Ovary (tissue), 10 donors: ENCODE measurements at regions of chrX and their contacts with region 1.

Region 1: DNA sequence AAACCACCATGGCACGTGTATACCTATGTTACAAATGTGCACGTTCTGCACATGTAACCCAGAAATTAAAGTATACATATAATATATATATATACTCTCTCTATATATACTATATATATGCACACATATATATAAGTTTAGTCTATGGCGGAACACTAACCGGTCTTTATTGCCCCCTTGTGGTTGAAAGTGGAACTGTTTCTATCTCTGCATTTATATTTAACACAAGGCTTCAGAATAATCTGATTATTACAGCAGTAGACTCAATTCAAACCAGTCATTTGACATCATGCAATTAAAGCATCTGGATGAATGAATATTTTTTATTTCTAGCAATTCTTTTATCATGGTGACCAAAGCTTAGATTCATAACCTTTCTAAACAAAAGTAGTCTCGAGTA is 14.6 kb downstream of the RAB9B start:
- DNase-seq: no peak
- H3K4me3 ChIP-seq: no peak overlapping the region
- H3K27ac ChIP-seq: no peak overlapping the region
- H3K4me1 ChIP-seq: no peaks in the 10 kb centered on the region
- H3K27me3 ChIP-seq: no peaks in the 10 kb centered on the region
- CTCF ChIP-seq: peak; percentile 49 to 56 (median 49)
- EP300 ChIP-seq: no peak
- POLR2A ChIP-seq: no peak

Region 2: DNA sequence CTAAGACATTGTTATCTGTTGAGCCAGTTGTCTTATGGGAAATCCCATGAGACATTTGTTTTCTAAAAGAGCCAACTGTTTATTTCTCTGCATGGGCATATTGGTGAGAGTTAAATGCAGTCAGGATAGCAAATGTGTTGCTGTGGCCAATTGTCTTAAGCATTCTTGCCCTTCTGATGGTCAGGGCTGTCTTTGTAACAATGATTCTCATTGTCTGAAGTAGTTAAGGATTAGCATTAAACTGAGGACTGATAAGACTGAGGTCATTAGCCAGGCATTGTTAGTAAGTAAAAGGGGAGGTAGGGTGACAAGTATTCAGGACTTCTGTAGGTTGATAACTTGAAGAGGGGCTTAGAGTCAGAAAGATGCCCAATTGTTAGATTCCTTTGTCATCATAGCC is 119.8 kb before region 1 on chrX:
- intact Hi-C with region 1: loop called in 2 of 4 experiments (anchors 10 kb)
- DNase-seq: no peak
- H3K4me3 ChIP-seq: no peak overlapping the region
- H3K27ac ChIP-seq: no peak overlapping the region
- H3K4me1 ChIP-seq: peaks cover 1% of the 10 kb centered on the region
- H3K27me3 ChIP-seq: no peaks in the 10 kb centered on the region
- CTCF ChIP-seq: no peak
- EP300 ChIP-seq: no peak
- POLR2A ChIP-seq: no peak

Region 3: DNA sequence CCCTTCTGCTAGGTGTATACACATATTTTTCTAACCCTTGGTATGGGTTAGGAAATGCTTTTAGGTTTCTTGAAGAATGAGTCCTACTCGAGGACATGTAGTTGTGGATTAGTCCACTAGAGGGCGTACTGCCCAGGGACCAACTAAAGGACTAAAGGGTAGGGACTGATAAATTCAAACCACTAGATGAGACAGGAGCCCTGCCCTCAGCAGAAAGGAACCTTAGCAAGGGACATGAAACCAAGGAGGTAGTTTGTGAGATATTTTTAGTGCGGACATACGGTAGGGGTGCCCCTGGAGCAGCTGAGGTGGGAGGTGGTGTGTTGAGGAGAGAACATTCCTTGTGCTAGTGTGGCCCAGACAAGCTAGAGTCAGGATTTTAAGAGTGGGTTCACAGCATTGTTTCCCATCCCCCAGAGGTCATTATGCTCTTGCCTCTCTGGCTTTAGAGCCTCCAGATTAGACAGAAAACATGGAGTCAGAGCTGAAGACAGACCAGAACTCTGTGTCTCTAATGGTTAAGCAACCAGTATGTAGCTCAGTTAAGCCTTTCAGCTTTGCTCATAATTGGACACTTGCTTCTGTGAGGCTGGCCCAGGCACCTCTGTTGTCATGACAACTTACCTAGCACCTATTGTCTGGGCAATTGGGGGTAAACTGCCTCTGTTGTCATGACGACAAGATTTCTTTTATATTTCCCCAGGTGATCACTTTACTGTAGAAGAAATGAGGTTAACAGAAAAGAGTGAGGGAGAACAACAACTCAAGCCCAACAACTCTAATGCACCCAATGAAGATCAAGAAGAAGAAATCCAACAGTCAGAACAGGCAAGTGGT is 105.8 kb before region 1 on chrX:
- intact Hi-C with region 1: loop called in 1 of 4 experiments (anchors 10 kb)
- DNase-seq: peak in 1 of 5 donors; percentile 58
- H3K4me3 ChIP-seq: no peak overlapping the region
- H3K27ac ChIP-seq: no peak overlapping the region
- H3K4me1 ChIP-seq: no peaks in the 10 kb centered on the region
- H3K27me3 ChIP-seq: no peaks in the 10 kb centered on the region
- CTCF ChIP-seq: peak in 1 of 3 donors; percentile 18
- EP300 ChIP-seq: no peak
- POLR2A ChIP-seq: no peak

Region 4: DNA sequence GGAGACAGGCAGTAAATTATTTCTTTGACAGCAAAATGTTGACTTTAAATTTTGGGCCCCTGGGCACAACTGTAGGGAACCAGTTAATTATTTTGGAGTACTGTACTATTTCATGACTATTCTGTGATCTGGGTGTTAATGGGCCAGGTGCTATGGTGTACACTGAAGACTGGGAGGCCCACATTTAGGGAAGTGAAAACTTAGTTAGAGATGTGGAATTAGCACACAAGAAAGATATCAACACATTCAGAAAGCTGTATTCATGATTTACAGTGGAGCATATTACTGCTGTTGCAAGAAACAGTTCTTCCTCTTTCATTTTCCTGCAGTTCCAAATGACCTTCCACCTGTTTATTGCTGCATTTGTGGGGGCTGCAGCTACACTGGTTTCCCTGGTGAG is 28.5 kb before region 1 on chrX:
- intact Hi-C with region 1: no loop called
- DNase-seq: no peak
- H3K4me3 ChIP-seq: no peak overlapping the region
- H3K27ac ChIP-seq: no peak overlapping the region
- H3K4me1 ChIP-seq: no peaks in the 10 kb centered on the region
- H3K27me3 ChIP-seq: no peaks in the 10 kb centered on the region
- CTCF ChIP-seq: no peak
- EP300 ChIP-seq: no peak
- POLR2A ChIP-seq: no peak

Region 5: GRCh38 chrX:103904301-103904700 is 86.8 kb after region 1 on chrX:
- intact Hi-C with region 1: no loop called
- DNase-seq: no peak
- H3K4me3 ChIP-seq: no peak overlapping the region
- H3K27ac ChIP-seq: no peak overlapping the region
- H3K4me1 ChIP-seq: no peaks in the 10 kb centered on the region
- H3K27me3 ChIP-seq: no peaks in the 10 kb centered on the region
- CTCF ChIP-seq: no peak
- EP300 ChIP-seq: no peak
- POLR2A ChIP-seq: no peak

Region 6: GRCh38 chrX:104400387-104400786 is 582.9 kb after region 1 on chrX:
- intact Hi-C with region 1: no loop called
- DNase-seq: no peak
- H3K4me3 ChIP-seq: no peak overlapping the region
- H3K27ac ChIP-seq: no peak overlapping the region
- H3K4me1 ChIP-seq: no peaks in the 10 kb centered on the region
- H3K27me3 ChIP-seq: no peaks in the 10 kb centered on the region
- CTCF ChIP-seq: no peak
- EP300 ChIP-seq: no peak
- POLR2A ChIP-seq: no peak